ENCODE measurements at regions of chr13 and their contacts with region 1.

Region 1: DNA sequence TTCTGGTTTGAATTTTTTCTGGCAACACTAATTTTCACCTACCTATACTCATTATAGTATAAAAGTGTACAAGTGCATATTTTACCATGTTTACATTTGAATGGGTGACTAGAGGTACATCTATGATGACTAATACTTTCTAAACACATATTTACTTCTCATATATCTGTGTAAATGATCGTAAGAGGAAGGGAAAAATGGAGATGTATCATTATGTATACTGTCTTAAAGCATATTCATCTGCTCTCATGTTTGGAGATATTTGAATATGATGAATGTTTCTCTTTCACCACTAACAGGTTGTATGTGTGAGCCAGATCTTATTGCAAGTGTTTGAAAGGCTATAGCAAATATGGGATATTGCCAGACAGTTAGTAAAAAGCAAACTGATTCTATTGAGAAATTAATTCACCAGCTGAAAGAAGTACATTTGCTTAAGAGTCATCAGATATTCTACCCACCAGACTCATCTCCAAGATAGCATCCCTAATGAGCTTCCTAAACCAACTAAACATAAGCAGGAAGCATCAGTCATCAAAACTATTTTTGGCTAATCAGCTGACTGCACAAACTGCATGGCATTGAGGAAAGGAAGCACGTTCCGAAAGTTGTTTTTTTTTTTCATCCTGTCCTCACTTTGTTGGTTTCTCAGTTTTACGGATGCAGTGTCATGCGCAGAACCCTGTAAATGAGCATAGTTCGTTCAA is 738.2 kb downstream of the GPC5 start:
- DNase-seq: peak; percentile 38
- ATAC-seq: peak; percentile 91
- H3K4me3 ChIP-seq: no peak overlapping the region
- H3K27ac ChIP-seq: peak overlapping the region; percentile 76
- H3K4me1 ChIP-seq: peaks cover 9% of the 10 kb centered on the region; the same call in 1 of the 2 replicates
- H3K27me3 ChIP-seq: no peaks in the 10 kb centered on the region
- CTCF ChIP-seq: no peak

Region 2: DNA sequence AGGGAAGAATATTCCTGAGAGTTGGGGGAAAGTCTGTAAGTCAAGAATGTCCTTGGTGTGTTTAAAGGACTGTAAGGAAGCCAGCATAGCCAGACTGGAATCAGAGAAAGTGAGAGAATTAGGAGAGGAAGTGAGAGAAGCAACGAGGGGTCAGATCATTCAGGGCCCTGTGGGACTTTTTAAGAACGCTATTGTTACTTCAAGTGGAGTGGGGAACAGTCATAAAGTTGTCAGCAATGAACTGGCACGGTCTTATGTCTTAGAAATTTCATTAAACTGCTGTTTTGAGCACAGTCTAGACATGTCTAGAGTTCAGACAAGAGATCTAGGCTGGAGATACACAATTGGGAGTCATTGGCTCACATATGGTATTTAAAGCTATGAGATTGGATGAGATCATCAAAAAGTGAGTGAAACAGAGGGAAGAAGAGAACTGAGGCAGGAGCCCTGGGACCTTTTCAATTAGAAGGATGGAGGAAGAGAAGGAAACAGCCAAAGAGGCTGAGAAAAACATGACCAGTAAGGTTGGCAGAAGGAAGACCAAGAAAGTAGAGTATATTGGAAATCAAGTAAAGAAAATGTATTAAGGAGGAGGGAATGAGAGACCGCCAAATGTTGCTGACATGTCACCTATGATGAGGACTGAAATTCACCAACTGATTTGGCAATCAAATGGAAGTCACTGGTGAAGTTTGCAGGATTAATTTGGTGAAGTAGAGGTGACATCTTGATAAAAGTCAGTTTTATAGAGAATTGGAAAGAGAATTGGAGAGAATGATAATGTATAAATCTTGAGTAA is 474.7 kb before region 1 on chr13:
- CTCF ChIA-PET with region 1: no interaction called
- POLR2A ChIA-PET with region 1: no interaction called
- intact Hi-C with region 1: no loop called
- DNase-seq: no peak
- ATAC-seq: no peak
- H3K4me3 ChIP-seq: no peak overlapping the region
- H3K27ac ChIP-seq: no peak overlapping the region
- H3K4me1 ChIP-seq: no peaks in the 10 kb centered on the region
- H3K27me3 ChIP-seq: no peaks in the 10 kb centered on the region
- CTCF ChIP-seq: no peak

Region 3: GRCh38 chr13:92103689-92104153 is 32.9 kb before region 1 on chr13:
- CTCF ChIA-PET with region 1: interaction called, 3 read pairs
- POLR2A ChIA-PET with region 1: interaction called, 3 read pairs
- intact Hi-C with region 1: loop called (anchors 2 kb)
- DNase-seq: peak; percentile 23
- ATAC-seq: peak; percentile 68
- H3K4me3 ChIP-seq: no peak overlapping the region
- H3K27ac ChIP-seq: no peak overlapping the region
- H3K4me1 ChIP-seq: no peaks in the 10 kb centered on the region
- H3K27me3 ChIP-seq: no peaks in the 10 kb centered on the region
- CTCF ChIP-seq: no peak

Region 4: GRCh38 chr13:92175330-92175729 is 38.7 kb after region 1 on chr13:
- CTCF ChIA-PET with region 1: no interaction called
- POLR2A ChIA-PET with region 1: no interaction called
- intact Hi-C with region 1: no loop called
- DNase-seq: peak; percentile 43
- ATAC-seq: peak; percentile 72
- H3K4me3 ChIP-seq: no peak overlapping the region
- H3K27ac ChIP-seq: no peak overlapping the region
- H3K4me1 ChIP-seq: no peaks in the 10 kb centered on the region
- H3K27me3 ChIP-seq: no peaks in the 10 kb centered on the region
- CTCF ChIP-seq: peak; percentile 58

Measured in PC-3 (cell line).